ENCODE measurements at regions of chr1 and their contacts with region 1.

Region 1: GRCh38 chr1:19704247-19705113 is 39.8 kb downstream of the HTR6 start:
- DNase-seq: peak; percentile 27 to 70 (median 49)
- H3K4me3 ChIP-seq: no peak overlapping the region
- H3K4me3 Mint-ChIP-seq: no peak overlapping the region
- H3K27ac ChIP-seq: no peak overlapping the region
- H3K27ac Mint-ChIP-seq: peak overlapping the region in 1 of 8 donors; percentile 89
- H3K4me1 ChIP-seq: peaks cover 12% of the 10 kb centered on the region
- H3K4me1 Mint-ChIP-seq: peaks cover 2 to 12% (median 6%) of the 10 kb centered on the region in 3 donors
- H3K27me3 ChIP-seq: no peaks in the 10 kb centered on the region
- H3K27me3 Mint-ChIP-seq: no peaks in the 10 kb centered on the region

Region 2: DNA sequence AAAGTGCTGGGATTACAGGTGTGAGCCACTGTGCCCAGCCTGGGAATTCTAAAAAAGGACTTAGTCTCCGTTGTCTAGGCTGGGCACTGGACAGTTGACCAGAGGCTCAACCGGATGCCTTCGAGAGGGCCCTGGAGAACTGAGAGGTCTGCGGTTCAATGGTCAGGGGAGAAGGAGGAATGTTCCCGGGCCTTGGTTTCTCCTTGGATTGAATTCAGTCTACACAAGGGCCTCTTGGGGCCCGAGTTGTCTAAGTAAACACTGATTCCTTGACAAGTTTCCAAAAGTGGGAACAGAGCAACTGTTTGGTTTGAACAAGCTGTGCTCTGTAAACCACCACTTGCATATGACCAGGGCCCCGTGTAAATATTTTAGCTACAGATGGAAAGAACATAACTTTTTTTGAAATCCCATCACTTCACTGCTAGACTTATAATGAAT is 190.1 kb before region 1 on chr1:
- CTCF ChIA-PET with region 1: no interaction called
- POLR2A ChIA-PET with region 1: no interaction called
- DNase-seq: no peak
- H3K4me3 ChIP-seq: no peak overlapping the region
- H3K4me3 Mint-ChIP-seq: no peak overlapping the region
- H3K27ac ChIP-seq: no peak overlapping the region
- H3K27ac Mint-ChIP-seq: no peak overlapping the region
- H3K4me1 ChIP-seq: no peaks in the 10 kb centered on the region
- H3K4me1 Mint-ChIP-seq: peaks cover 0 to 5% (median 1%) of the 10 kb centered on the region in 3 donors
- H3K27me3 ChIP-seq: no peaks in the 10 kb centered on the region
- H3K27me3 Mint-ChIP-seq: peaks cover 0 to 6% of the 10 kb centered on the region in 2 donors

Region 3: DNA sequence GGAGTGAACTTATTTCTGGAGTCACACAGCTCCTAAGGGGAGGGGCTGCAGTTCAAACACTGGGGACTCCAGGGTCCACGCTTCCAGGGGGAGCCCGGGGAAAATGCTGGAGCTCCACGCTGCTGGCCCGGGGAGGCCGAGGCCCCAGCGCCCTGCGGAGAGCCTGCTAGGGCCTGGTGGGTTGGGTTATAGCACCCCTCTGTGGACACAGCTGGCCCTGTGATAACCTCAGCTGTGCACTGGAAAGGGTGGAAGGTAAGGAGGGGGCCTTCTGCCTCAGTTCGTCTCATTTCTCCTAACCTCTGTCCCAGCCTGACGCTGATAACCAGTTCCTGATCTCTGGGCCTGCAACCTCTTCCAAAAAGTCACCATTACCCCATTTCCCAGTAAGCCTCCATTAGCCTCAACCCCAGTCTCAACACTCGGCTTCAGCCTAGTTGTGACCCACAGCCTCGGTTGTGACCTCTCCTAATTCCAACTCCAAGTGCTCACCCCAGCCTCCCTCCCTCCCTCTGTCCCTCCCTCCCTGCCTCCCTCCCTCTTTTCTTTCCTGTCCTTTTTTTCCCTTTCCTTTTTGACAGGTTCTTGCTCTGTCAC is 53.2 kb before region 1 on chr1:
- CTCF ChIA-PET with region 1: interaction called, 168 read pairs
- POLR2A ChIA-PET with region 1: no interaction called
- DNase-seq: peak in 3 of 5 donors; percentile 28 to 62 (median 45)
- H3K4me3 ChIP-seq: no peak overlapping the region
- H3K4me3 Mint-ChIP-seq: no peak overlapping the region
- H3K27ac ChIP-seq: no peak overlapping the region
- H3K27ac Mint-ChIP-seq: peak overlapping the region in 1 of 8 donors; percentile 8
- H3K4me1 ChIP-seq: peaks cover 12% of the 10 kb centered on the region
- H3K4me1 Mint-ChIP-seq: peaks cover 12 to 35% (median 18%) of the 10 kb centered on the region in 3 donors
- H3K27me3 ChIP-seq: no peaks in the 10 kb centered on the region
- H3K27me3 Mint-ChIP-seq: peaks cover 0 to 4% of the 10 kb centered on the region in 2 donors

Region 4: GRCh38 chr1:19661721-19662228 is 42.7 kb before region 1 on chr1:
- CTCF ChIA-PET with region 1: interaction called, 168 read pairs
- POLR2A ChIA-PET with region 1: interaction called, 3 read pairs
- DNase-seq: peak in 4 of 5 donors; percentile 15 to 50 (median 28)
- H3K4me3 ChIP-seq: no peak overlapping the region
- H3K4me3 Mint-ChIP-seq: peak overlapping the region in 2 of 7 donors; percentile 38 to 46
- H3K27ac ChIP-seq: no peak overlapping the region
- H3K27ac Mint-ChIP-seq: no peak overlapping the region
- H3K4me1 ChIP-seq: peaks cover 9% of the 10 kb centered on the region
- H3K4me1 Mint-ChIP-seq: peaks cover 10 to 29% (median 24%) of the 10 kb centered on the region in 3 donors
- H3K27me3 ChIP-seq: peaks cover 5% of the 10 kb centered on the region
- H3K27me3 Mint-ChIP-seq: peaks cover 19 to 28% of the 10 kb centered on the region in 2 donors

Region 5: GRCh38 chr1:19670787-19671186 is 33.7 kb before region 1 on chr1:
- CTCF ChIA-PET with region 1: interaction called, 19 read pairs
- POLR2A ChIA-PET with region 1: no interaction called
- DNase-seq: no peak
- H3K4me3 ChIP-seq: no peak overlapping the region
- H3K4me3 Mint-ChIP-seq: no peak overlapping the region
- H3K27ac ChIP-seq: no peak overlapping the region
- H3K27ac Mint-ChIP-seq: peak overlapping the region in 1 of 8 donors; percentile 17
- H3K4me1 ChIP-seq: no peaks in the 10 kb centered on the region
- H3K4me1 Mint-ChIP-seq: peaks cover 6 to 28% (median 11%) of the 10 kb centered on the region in 3 donors
- H3K27me3 ChIP-seq: no peaks in the 10 kb centered on the region
- H3K27me3 Mint-ChIP-seq: peaks cover 31 to 35% of the 10 kb centered on the region in 2 donors

Region 6: DNA sequence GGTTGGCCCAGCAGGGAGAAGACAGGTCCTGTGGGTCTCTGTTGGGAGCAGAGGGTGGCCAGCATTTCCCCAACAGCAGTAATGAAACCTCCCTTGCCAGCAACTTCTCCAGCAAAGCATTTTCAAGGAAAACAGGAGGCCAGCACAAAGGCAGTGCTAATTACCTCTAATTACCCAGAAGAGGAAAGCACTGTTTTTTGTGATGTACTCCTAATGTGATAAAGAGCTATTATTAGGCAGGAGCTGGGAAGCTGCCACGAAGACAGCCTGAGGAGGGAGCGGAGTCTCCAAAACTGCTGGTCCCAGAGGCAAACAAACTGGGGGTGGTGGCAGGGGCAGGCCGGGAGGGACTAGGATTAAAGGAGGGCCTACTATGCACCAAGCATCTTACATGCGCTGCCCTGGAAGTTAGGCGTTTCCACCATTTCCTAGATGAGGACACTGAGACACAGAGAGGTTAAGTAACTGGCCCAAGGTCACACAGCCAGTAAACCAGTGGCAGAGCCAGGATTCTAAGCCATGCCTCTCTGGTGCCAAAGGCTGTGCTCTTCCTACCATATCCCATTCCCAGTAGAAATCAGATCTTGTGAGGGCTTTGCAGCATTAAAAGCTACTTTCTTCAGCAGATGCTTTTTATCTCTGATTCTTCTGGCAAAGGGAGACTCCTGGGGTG is 15.3 kb before region 1 on chr1:
- CTCF ChIA-PET with region 1: interaction called, 28 read pairs
- POLR2A ChIA-PET with region 1: no interaction called
- DNase-seq: no peak
- H3K4me3 ChIP-seq: no peak overlapping the region
- H3K4me3 Mint-ChIP-seq: peak overlapping the region in 3 of 7 donors; percentile 64 to 83 (median 70)
- H3K27ac ChIP-seq: peak overlapping the region; percentile 74
- H3K27ac Mint-ChIP-seq: peak overlapping the region; percentile 48 to 98 (median 94)
- H3K4me1 ChIP-seq: peaks cover 48% of the 10 kb centered on the region
- H3K4me1 Mint-ChIP-seq: peaks cover 19 to 56% (median 47%) of the 10 kb centered on the region in 3 donors
- H3K27me3 ChIP-seq: no peaks in the 10 kb centered on the region
- H3K27me3 Mint-ChIP-seq: no peaks in the 10 kb centered on the region

Region 7: DNA sequence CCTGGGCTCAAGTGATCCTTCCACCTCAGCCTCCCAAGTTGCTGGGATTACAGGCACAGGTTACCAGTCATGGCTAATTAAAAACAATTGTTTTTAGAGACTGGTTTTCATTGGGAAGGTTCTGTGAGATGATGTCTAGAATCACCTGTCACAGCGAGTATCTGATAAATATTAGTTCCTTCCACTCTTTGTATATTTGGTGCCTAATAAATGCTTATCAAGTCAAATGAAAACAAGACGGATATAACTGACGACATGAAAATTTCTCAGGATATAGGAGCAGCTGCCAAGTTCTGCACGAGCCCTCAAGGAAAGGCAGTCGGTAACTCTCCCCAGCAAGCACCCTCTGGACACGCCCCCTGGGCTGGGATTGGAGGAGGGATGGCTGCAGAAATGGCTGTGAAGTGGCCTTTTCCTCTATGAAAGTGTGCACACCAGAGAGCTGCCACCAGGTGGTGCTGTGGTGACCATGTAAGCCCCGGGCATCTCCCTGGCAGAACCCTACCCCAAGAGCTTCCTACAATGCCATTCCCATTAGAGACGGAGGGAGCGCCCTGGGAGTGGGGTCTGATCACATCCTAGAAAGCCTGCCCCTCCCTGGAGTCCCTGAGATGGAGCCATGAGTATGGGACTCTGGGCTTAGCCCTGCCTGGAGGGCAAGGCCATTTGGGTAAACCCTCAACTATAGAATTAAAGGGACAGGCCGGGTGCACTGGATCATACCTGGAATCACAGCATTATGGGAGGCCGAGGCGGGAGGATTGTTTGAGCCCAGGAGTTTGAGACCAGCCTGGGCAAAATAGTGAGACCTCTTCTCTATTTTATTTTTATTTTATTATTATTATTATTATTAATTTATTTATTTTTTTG is 11.1 kb after region 1 on chr1:
- CTCF ChIA-PET with region 1: interaction called, 18 read pairs
- POLR2A ChIA-PET with region 1: no interaction called
- DNase-seq: peak; percentile 62 to 82 (median 69)
- H3K4me3 ChIP-seq: no peak overlapping the region
- H3K4me3 Mint-ChIP-seq: no peak overlapping the region
- H3K27ac ChIP-seq: no peak overlapping the region
- H3K27ac Mint-ChIP-seq: peak overlapping the region in 4 of 8 donors; percentile 15 to 64 (median 28)
- H3K4me1 ChIP-seq: no peaks in the 10 kb centered on the region
- H3K4me1 Mint-ChIP-seq: peaks cover 6 to 17% (median 14%) of the 10 kb centered on the region in 3 donors
- H3K27me3 ChIP-seq: no peaks in the 10 kb centered on the region
- H3K27me3 Mint-ChIP-seq: no peaks in the 10 kb centered on the region

Region 8: GRCh38 chr1:20017741-20018140 is 313.3 kb after region 1 on chr1:
- CTCF ChIA-PET with region 1: no interaction called
- POLR2A ChIA-PET with region 1: no interaction called
- DNase-seq: no peak
- H3K4me3 ChIP-seq: no peak overlapping the region
- H3K4me3 Mint-ChIP-seq: no peak overlapping the region
- H3K27ac ChIP-seq: no peak overlapping the region
- H3K27ac Mint-ChIP-seq: no peak overlapping the region
- H3K4me1 ChIP-seq: no peaks in the 10 kb centered on the region
- H3K4me1 Mint-ChIP-seq: no peaks in the 10 kb centered on the region
- H3K27me3 ChIP-seq: no peaks in the 10 kb centered on the region
- H3K27me3 Mint-ChIP-seq: peaks cover 15 to 16% of the 10 kb centered on the region in 2 donors